ENCODE measurements at regions of chr5 and their contacts with region 1.

Region 1: DNA sequence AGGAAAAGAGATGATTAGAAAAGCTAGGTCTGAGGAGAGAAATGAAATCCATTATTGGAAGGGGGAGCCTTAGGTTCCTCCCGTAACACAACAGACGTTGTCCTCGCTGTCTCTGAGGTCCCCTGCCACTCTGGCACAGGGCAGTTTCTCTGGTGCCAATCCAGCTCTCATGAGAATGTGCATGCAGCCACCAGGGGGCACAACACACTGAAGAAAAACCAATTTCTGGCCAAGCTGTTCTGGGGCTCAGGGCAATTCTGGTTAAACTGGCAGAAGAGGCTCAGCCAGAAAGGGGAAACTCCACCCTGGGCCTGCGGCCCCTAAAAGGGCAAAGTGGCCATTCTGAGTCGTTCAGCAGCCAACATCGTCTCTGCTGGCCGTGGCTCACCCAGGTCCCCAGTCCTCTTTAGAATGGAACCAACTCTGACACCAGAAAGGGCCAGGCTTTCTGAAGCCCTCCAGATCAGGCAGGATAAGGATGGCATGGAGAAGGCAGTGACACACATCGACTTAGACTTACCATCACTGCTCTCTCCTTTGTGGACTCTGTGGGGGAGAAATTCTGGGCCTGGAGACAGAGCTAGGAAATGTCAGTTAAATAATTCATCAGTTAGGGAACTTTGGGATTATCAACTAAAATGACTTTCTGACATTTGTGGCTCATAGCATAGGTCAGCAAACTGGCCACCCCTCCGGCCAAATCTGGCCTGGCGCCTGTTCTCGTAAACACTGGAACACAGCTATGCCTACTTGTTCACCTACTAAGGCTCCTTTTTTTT is 58.5 kb upstream of the GOLPH3 start:
- DNase-seq: peak; percentile 19
- ATAC-seq: peak; percentile 99
- H3K4me3 ChIP-seq: no peak overlapping the region
- H3K27ac ChIP-seq: no peak overlapping the region
- H3K4me1 ChIP-seq: no peaks in the 10 kb centered on the region
- H3K27me3 ChIP-seq: no peaks in the 10 kb centered on the region
- CTCF ChIP-seq: peak; percentile 78 to 87 (median 80)
- EP300 ChIP-seq: no peak
- POLR2A ChIP-seq: no peak
- RAD21 ChIP-seq: peak; percentile 90

Region 2: GRCh38 chr5:31901807-31902530 is 330.7 kb before region 1 on chr5:
- CTCF ChIA-PET with region 1: no interaction called
- POLR2A ChIA-PET with region 1: no interaction called
- RAD21 ChIA-PET with region 1: no interaction called
- SMC1A ChIA-PET with region 1: no interaction called
- in situ Hi-C with region 1: no loop called
- intact Hi-C with region 1: no loop called
- DNase-seq: no peak
- ATAC-seq: no peak
- H3K4me3 ChIP-seq: no peak overlapping the region
- H3K27ac ChIP-seq: no peak overlapping the region
- H3K4me1 ChIP-seq: no peaks in the 10 kb centered on the region
- H3K27me3 ChIP-seq: no peaks in the 10 kb centered on the region
- CTCF ChIP-seq: no peak
- EP300 ChIP-seq: no peak
- POLR2A ChIP-seq: no peak
- RAD21 ChIP-seq: no peak

Region 3: GRCh38 chr5:32276173-32276853 is 43.7 kb after region 1 on chr5:
- CTCF ChIA-PET with region 1: interaction called, 16 read pairs
- POLR2A ChIA-PET with region 1: interaction called, 5 read pairs
- RAD21 ChIA-PET with region 1: interaction called, 4 read pairs
- SMC1A ChIA-PET with region 1: interaction called, 7 read pairs
- in situ Hi-C with region 1: no loop called
- intact Hi-C with region 1: no loop called
- DNase-seq: no peak
- ATAC-seq: peak; percentile 63
- H3K4me3 ChIP-seq: no peak overlapping the region
- H3K27ac ChIP-seq: peak overlapping the region; percentile 19; the same call in 1 of the 2 replicates
- H3K4me1 ChIP-seq: peaks cover 39% of the 10 kb centered on the region
- H3K27me3 ChIP-seq: no peaks in the 10 kb centered on the region
- CTCF ChIP-seq: no peak
- EP300 ChIP-seq: no peak
- POLR2A ChIP-seq: no peak
- RAD21 ChIP-seq: no peak

Region 4: GRCh38 chr5:32387211-32387610 is 154.6 kb after region 1 on chr5:
- CTCF ChIA-PET with region 1: interaction called, 10 read pairs
- POLR2A ChIA-PET with region 1: no interaction called
- RAD21 ChIA-PET with region 1: interaction called, 5 read pairs
- SMC1A ChIA-PET with region 1: interaction called, 5 read pairs
- in situ Hi-C with region 1: no loop called
- intact Hi-C with region 1: no loop called
- DNase-seq: no peak
- ATAC-seq: no peak
- H3K4me3 ChIP-seq: no peak overlapping the region
- H3K27ac ChIP-seq: no peak overlapping the region
- H3K4me1 ChIP-seq: no peaks in the 10 kb centered on the region
- H3K27me3 ChIP-seq: no peaks in the 10 kb centered on the region
- CTCF ChIP-seq: no peak
- EP300 ChIP-seq: no peak
- POLR2A ChIP-seq: no peak
- RAD21 ChIP-seq: no peak

Region 5: GRCh38 chr5:32613050-32613672 is 380.5 kb after region 1 on chr5:
- CTCF ChIA-PET with region 1: interaction called, 32 read pairs
- POLR2A ChIA-PET with region 1: no interaction called
- RAD21 ChIA-PET with region 1: interaction called, 8 read pairs
- SMC1A ChIA-PET with region 1: interaction called, 3 read pairs
- in situ Hi-C with region 1: loop called (anchors 10 kb)
- intact Hi-C with region 1: loop called (anchors 1 kb)
- DNase-seq: peak; percentile 46
- ATAC-seq: peak; percentile 90
- H3K4me3 ChIP-seq: no peak overlapping the region
- H3K27ac ChIP-seq: no peak overlapping the region
- H3K4me1 ChIP-seq: no peaks in the 10 kb centered on the region
- H3K27me3 ChIP-seq: no peaks in the 10 kb centered on the region
- CTCF ChIP-seq: peak; percentile 80 to 96 (median 95); a peak in 5 of 6 replicates
- EP300 ChIP-seq: no peak
- POLR2A ChIP-seq: no peak
- RAD21 ChIP-seq: peak; percentile 98

Measured in GM12878 (cell line).